H1 (cell line): ENCODE measurements at regions of chr11 and their contacts with region 1.

Region 1: DNA sequence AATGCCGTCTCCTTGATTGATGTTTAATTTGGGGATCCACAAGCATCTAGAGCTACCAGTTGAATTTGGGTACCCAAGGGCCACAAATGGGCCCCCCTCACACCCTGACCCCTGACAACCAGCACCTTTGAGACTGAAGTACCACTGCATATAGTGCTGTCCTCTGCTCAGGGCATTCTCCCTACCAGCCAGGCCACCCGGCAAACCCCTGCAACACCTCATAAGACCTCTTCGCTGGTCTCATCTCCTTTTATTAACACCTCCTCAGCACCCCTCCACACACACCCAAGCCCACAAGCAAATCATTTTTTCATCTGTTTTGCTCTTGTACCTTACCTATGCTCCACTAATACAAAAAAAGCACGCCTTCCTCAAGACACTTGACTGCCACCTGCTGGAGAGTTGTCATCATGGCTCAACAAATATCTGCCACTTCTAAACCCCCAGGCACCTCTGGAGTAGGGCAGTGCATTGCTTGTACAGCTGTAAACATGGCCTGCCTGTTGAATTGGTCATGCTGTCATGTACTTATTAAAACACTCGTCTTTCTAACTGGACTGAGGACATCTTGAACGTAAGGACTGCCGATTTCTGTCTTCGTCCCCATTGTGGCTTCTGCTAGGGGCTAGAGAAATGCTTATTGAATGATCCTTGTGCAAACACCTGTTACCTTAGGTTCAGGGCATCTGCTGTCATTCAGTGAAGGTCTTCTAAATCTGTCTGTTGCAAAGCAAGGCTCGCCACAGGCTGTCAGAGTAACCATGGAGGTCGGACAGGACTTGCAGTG is 66.5 kb downstream of the BMAL1 start:
- DNase-seq: peak in 1 of 2 experiments; percentile 82
- H3K4me3 ChIP-seq: no peak overlapping the region
- H3K27ac ChIP-seq: no peak overlapping the region
- H3K4me1 ChIP-seq: peaks cover 0 to 2% (median 0%) of the 10 kb centered on the region in 4 experiments; a peak in 1 of 7 replicates
- H3K27me3 ChIP-seq: no peaks in the 10 kb centered on the region
- CTCF ChIP-seq: peak; percentile 29 to 85 (median 78)
- EP300 ChIP-seq: no peak
- POLR2A ChIP-seq: no peak
- RAD21 ChIP-seq: peak; percentile 79 to 83

Region 2: DNA sequence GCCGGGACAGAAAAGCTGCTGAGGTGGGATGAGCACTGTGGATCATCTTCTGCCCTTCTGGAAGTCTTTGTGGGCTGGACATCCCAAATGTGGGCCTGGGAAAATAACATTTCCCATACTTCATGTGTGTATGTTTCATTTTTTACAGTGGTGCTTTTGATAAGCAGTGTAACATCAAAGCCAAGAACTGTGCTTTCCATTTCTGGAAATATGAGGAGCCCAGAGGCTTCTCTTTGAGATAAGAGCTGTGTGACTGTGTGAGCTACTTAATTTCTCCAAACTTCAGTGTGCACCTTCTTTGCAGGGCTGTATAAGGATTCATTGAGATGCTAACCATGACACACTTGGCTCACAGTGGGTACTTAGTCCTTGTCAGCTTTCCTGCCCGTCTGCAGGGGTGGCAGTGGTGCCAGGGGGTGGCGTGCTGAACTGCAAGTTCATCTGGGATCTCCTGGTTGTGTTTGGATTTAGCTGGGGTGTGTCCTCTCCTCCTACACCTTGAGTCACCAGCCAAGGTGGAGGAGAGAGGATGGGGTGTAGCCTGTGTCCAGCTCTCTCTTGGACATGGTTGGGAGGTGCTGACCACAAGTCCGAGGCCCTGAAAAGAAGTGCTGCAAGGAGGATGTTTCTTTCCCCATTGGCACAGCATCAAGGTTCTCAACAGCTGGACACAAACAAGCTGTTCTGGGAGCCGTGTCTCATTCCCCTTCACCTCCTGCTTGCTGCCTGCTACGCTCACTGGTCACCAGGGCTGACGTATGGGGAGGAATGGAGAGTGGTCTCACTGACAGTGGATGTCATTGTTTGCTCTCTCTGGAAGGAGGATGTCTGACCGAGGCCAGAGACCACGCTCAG is 530.5 kb before region 1 on chr11:
- CTCF ChIA-PET with region 1: no interaction called
- POLR2A ChIA-PET with region 1: no interaction called
- DNase-seq: no peak
- H3K4me3 ChIP-seq: no peak overlapping the region
- H3K27ac ChIP-seq: no peak overlapping the region
- H3K4me1 ChIP-seq: peaks cover 3 to 14% (median 7%) of the 10 kb centered on the region in 4 experiments; a peak in 6 of 7 replicates
- H3K27me3 ChIP-seq: no peaks in the 10 kb centered on the region
- CTCF ChIP-seq: no peak
- EP300 ChIP-seq: no peak
- POLR2A ChIP-seq: no peak
- RAD21 ChIP-seq: no peak

Region 3: DNA sequence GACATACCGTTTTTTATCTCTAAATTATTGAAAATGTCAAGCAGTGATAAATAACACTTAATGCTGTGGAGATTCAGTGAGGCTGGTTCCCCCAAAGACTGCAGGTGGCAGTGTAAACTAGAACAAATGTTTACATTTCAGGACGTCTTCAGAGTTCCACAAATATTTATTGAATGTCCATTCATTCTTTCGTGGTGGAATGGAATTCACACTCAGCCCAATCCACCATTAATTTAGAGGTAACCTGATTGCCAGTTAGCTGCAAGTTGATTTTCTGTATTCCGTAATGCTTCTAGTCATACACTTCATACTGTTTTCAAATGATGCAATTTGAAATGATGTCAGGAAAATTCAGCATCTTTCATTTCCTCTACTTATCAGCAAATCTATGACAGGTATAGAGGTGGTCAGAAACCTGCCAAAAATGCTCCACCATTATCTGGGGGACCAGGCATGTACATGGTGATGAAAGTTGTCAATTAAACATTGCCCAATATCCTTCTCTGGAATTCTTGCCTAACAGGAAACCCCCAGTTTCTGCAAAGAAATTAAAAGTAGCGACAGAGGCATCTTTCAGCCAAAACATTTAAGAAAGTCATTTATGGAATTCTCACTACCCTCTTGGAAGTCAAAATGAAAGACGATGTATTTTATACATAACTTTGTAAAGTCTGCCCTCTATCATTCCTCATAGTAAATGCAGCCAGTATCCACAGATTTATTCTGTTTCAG is 160.9 kb before region 1 on chr11:
- CTCF ChIA-PET with region 1: interaction called, 11 read pairs
- POLR2A ChIA-PET with region 1: no interaction called
- DNase-seq: no peak
- H3K4me3 ChIP-seq: no peak overlapping the region
- H3K27ac ChIP-seq: no peak overlapping the region
- H3K4me1 ChIP-seq: no peaks in the 10 kb centered on the region
- H3K27me3 ChIP-seq: no peaks in the 10 kb centered on the region
- CTCF ChIP-seq: peak in 2 of 3 experiments; percentile 20 to 45; a peak in 2 of 4 replicates
- EP300 ChIP-seq: no peak
- POLR2A ChIP-seq: no peak
- RAD21 ChIP-seq: peak; percentile 50 to 60

Region 4: DNA sequence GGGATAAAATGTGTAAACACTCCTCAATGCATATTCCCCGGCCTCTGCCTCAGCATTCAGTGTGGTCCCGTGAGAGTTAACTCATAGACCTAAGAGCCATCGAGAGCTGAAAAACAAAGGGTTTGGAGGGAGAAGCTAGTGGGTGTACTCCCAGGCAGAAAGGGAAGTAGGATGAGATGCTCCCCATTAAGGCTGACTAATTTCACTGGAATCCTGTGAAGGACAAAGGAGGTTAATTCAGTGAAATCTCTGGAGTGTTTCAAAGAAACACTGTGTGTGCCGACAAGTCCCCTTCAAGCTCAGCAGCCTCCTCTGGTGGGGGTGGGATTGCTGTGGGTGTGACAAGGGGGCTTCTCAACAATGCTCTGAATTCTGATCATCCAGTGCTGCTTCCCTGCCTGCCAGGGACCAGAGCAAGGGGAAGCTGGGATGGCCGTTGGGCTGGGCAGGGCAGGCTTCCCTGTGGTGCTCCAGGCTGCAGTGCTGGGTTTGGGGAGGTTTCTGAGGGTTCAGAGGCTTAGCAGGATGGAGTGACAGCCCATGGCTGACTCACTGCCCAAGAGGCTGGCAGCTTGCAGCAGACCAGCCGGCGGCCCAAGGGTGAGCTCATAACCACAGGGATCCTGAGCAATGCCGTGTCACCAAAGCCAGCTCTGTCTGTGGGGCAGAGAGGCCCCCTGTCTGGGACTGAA is 128.0 kb before region 1 on chr11:
- CTCF ChIA-PET with region 1: interaction called, 98 read pairs
- POLR2A ChIA-PET with region 1: no interaction called
- DNase-seq: peak in 1 of 2 experiments; percentile 56
- H3K4me3 ChIP-seq: no peak overlapping the region
- H3K27ac ChIP-seq: no peak overlapping the region
- H3K4me1 ChIP-seq: peaks cover 0 to 6% (median 2%) of the 10 kb centered on the region in 4 experiments; a peak in 2 of 7 replicates
- H3K27me3 ChIP-seq: no peaks in the 10 kb centered on the region
- CTCF ChIP-seq: no peak
- EP300 ChIP-seq: no peak
- POLR2A ChIP-seq: no peak
- RAD21 ChIP-seq: no peak

Region 5: GRCh38 chr11:13249996-13250395 is 94.1 kb before region 1 on chr11:
- CTCF ChIA-PET with region 1: interaction called, 27 read pairs
- POLR2A ChIA-PET with region 1: no interaction called
- DNase-seq: no peak
- H3K4me3 ChIP-seq: no peak overlapping the region
- H3K27ac ChIP-seq: no peak overlapping the region
- H3K4me1 ChIP-seq: no peaks in the 10 kb centered on the region
- H3K27me3 ChIP-seq: no peaks in the 10 kb centered on the region
- CTCF ChIP-seq: peak in 2 of 3 experiments; percentile 31 to 40; a peak in 3 of 4 replicates
- EP300 ChIP-seq: no peak
- POLR2A ChIP-seq: no peak
- RAD21 ChIP-seq: peak; percentile 35 to 51; a peak in 3 of 4 replicates

Region 6: GRCh38 chr11:13289081-13289480 is 55.0 kb before region 1 on chr11:
- CTCF ChIA-PET with region 1: interaction called, 16 read pairs
- POLR2A ChIA-PET with region 1: no interaction called
- DNase-seq: no peak
- H3K4me3 ChIP-seq: no peak overlapping the region
- H3K27ac ChIP-seq: no peak overlapping the region
- H3K4me1 ChIP-seq: no peaks in the 10 kb centered on the region
- H3K27me3 ChIP-seq: no peaks in the 10 kb centered on the region
- CTCF ChIP-seq: peak in 1 of 3 experiments; percentile 2; a peak in 1 of 4 replicates
- EP300 ChIP-seq: no peak
- POLR2A ChIP-seq: no peak
- RAD21 ChIP-seq: peak; percentile 38 to 44

Region 7: DNA sequence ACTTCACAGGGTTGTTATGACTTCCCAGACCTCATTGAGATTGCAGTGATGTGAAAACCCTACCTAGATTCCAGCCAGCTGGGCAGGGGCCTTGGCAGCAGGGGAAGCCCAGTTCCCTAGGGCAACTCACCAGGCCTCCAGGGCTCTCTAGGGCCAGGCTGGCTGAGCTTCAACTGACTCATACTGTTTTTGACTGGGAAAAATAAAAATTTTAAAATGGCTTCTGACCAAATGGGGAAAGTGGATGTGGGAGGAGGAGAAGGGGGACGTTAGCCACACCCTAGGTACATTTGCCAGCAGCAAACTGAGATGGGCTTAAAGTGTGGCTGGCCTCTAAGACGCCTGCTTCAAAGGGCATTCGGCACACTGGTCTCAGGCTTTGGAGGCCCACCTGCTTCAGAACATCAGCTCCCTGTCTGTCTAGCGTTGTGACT is 27.6 kb before region 1 on chr11:
- CTCF ChIA-PET with region 1: interaction called, 10 read pairs
- POLR2A ChIA-PET with region 1: no interaction called
- DNase-seq: no peak
- H3K4me3 ChIP-seq: no peak overlapping the region
- H3K27ac ChIP-seq: no peak overlapping the region
- H3K4me1 ChIP-seq: peaks cover 0 to 11% (median 4%) of the 10 kb centered on the region in 4 experiments; a peak in 5 of 7 replicates
- H3K27me3 ChIP-seq: no peaks in the 10 kb centered on the region
- CTCF ChIP-seq: no peak
- EP300 ChIP-seq: no peak
- POLR2A ChIP-seq: no peak
- RAD21 ChIP-seq: no peak

Region 8: GRCh38 chr11:13354335-13354734 is 10.2 kb after region 1 on chr11:
- CTCF ChIA-PET with region 1: interaction called, 45 read pairs
- POLR2A ChIA-PET with region 1: no interaction called
- DNase-seq: no peak
- H3K4me3 ChIP-seq: no peak overlapping the region
- H3K27ac ChIP-seq: no peak overlapping the region
- H3K4me1 ChIP-seq: peaks cover 0 to 4% (median 0%) of the 10 kb centered on the region in 4 experiments; a peak in 2 of 7 replicates
- H3K27me3 ChIP-seq: no peaks in the 10 kb centered on the region
- CTCF ChIP-seq: peak in 2 of 3 experiments; percentile 64; a peak in 3 of 4 replicates
- EP300 ChIP-seq: no peak
- POLR2A ChIP-seq: no peak
- RAD21 ChIP-seq: peak; percentile 52 to 62

Region 9: GRCh38 chr11:13415203-13415602 is 71.1 kb after region 1 on chr11:
- CTCF ChIA-PET with region 1: no interaction called
- POLR2A ChIA-PET with region 1: no interaction called
- DNase-seq: no peak
- H3K4me3 ChIP-seq: no peak overlapping the region
- H3K27ac ChIP-seq: no peak overlapping the region
- H3K4me1 ChIP-seq: no peaks in the 10 kb centered on the region
- H3K27me3 ChIP-seq: no peaks in the 10 kb centered on the region
- CTCF ChIP-seq: no peak
- EP300 ChIP-seq: no peak
- POLR2A ChIP-seq: no peak
- RAD21 ChIP-seq: no peak

Region 10: DNA sequence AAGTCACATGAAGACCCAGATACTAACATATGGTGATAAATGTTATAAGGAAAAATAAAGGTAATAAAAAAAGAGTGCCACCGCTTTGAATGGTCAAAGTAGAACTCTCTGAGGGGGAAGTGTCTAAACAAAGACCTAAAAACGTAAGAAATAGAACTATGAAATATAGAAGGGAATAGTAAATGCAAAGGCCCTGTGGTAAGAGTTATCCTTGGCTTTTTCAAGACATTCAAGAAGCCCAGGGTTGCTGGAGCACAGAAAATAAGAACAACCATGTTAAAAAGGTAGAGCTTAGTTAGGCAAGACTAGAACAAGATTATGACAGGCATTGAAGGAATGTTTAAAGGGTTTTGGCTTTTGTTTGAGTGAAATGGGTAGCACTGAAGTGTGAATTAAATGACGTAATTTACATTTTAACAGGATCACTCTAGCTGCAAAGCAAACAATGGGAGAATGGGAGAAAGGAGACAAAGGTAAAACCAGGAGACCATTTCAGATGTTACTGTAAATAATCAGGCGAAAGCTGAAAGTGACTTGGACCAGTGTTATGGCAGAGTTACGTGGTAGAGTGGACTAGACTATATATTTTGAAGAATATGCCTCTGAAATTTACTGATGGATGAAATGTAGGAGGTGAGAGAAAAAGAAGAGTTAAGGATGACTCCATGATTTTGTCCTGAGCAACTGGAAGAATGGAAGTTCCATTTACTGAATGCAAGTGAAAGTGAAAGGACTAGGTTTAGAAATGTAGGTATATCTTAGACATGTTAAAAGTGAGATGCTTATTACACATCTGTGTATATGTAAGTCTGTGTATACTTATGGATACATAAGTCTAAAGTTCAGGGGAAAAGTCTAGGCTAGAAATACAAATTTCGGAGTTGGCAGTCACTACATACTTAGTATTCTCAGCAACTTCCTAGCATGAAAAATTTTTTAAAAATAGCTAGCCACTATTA is 90.4 kb after region 1 on chr11:
- CTCF ChIA-PET with region 1: no interaction called
- POLR2A ChIA-PET with region 1: no interaction called
- DNase-seq: no peak
- H3K4me3 ChIP-seq: peak overlapping the region in 1 of 4 experiments; percentile 30; a peak in 1 of 8 replicates
- H3K27ac ChIP-seq: peak overlapping the region; percentile 57; the same call in 1 of the 2 replicates
- H3K4me1 ChIP-seq: peaks cover 0 to 4% (median 2%) of the 10 kb centered on the region in 4 experiments; a peak in 3 of 7 replicates
- H3K27me3 ChIP-seq: no peaks in the 10 kb centered on the region
- CTCF ChIP-seq: no peak
- EP300 ChIP-seq: no peak
- POLR2A ChIP-seq: no peak
- RAD21 ChIP-seq: no peak

Region 11: DNA sequence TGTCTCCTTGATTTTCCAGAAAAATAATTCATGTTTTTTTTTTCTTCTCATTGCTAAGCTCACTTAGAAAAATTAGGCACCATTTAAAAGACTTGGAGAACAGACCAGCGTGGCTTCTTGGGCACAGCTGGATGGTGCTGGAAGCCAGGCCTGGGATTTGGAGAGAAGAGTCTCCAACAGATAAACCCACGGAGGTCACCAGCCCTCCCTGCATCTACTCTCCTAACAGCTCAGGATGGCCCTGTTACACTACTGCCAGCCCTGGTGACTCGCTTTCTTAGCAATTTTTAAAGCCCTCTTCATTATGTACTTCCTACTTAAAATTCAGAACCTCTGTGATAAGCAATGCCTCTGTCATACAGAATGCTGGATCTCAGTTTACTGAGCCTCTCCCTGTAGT is 149.9 kb after region 1 on chr11:
- CTCF ChIA-PET with region 1: no interaction called
- POLR2A ChIA-PET with region 1: no interaction called
- DNase-seq: no peak
- H3K4me3 ChIP-seq: no peak overlapping the region
- H3K27ac ChIP-seq: no peak overlapping the region
- H3K4me1 ChIP-seq: no peaks in the 10 kb centered on the region
- H3K27me3 ChIP-seq: no peaks in the 10 kb centered on the region
- CTCF ChIP-seq: no peak
- EP300 ChIP-seq: no peak
- POLR2A ChIP-seq: no peak
- RAD21 ChIP-seq: no peak